ENCODE measurements at regions of chr2 and their contacts with region 1.

Region 1: GRCh38 chr2:216498418-216499413 is at the start of gene RPL37A:
- H3K4me3 Mint-ChIP-seq: peak within 1 kb of the TSS; percentile 99
- H3K27ac Mint-ChIP-seq: peak within 1 kb of the TSS; percentile 99
- H3K4me1 Mint-ChIP-seq: peaks cover 61% of the 10 kb centered on the region
- H3K27me3 Mint-ChIP-seq: no peaks in the 10 kb centered on the region

Region 2: DNA sequence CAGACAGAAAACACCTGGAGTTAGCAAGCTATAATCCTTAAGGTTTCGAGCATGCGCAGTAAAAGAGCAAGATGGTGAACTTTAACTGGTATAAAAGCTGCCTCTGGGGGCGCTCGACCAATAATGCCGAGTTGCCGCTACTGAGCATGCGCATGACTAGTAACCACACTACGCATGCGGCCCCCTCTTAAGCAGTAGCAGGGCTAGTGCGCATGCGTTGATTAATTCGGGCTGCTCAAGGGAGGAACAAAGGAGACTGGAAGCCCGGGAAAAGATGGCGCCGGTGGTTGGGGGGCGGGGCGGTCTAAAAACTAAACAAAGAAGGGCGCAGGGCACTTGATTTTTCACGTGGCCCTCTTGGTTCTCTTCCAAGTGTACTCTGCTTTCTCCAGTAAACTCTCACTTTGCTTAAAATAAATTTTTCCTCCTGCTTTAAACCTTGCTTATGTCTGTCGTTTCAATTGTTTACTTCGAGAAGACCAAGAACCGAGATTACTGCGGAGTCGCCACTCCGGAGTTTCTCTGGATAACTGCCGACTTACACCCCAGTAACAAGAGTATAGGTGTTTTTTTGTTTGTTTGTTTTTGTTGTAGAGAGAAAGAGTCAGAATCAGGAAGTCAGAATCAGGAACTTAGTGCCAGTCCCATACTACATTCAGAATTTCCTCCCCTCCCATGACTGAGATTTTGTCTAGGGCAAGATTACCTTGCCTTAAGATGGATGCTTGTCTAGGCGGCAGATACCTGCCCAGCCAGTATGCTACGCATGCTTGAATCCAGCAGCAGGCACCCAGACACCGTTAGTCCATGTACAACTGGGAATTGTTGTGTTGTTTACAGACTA is 383.8 kb before region 1 on chr2:
- intact Hi-C with region 1: loop called (anchors 5 kb)
- H3K4me3 Mint-ChIP-seq: peak overlapping the region; percentile 82
- H3K27ac Mint-ChIP-seq: peak overlapping the region; percentile 100
- H3K4me1 Mint-ChIP-seq: peaks cover 86% of the 10 kb centered on the region
- H3K27me3 Mint-ChIP-seq: no peaks in the 10 kb centered on the region

Region 3: DNA sequence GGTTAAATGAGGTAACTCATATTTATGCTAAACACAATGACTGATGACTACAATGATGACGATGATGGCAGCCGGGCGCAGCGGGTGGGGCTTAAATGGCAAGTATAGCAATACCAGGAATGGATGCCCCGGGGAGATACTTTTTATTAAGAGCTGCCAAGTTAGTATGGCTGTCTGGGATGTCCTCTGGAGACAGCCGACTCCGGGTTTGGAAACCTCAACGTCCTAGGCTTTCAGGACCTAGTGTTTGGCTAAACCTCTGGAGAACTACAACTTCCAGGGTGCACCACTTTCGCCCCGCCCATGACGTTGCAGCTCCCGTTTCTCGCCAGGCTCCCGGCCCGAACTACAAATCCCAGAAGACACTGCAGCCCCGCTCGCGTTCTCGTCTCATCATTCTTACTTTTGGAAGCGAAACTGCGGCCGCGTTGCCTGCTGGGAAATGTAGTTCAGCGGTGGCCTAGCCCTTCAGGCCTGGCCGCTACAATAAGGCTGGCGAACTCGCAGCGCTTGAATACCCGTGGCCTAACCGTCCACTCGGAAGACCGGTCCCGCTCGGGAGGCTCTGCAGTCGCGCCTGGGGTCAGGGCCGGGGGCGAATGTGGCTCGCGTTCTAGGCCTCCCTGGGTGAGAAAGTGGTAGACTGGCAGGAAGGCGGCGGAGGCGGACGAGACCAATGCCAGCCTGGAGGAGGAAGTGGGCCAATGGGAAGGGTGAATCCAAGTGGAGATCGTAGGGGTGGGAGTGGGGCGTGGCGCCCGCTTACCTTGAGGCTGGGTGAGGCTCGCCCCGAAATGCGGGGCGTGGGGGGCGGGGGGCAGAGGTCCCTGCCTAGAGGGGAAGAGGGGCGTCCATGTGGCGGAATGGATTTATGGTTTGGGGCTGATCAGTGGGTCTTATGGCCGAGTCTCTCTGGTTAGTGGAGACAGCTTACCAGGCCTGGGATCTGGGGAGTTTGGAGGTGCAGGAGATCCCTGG is 86.4 kb before region 1 on chr2 and contains the start of gene SMARCAL1:
- intact Hi-C with region 1: loop called (anchors 1 kb)
- H3K4me3 Mint-ChIP-seq: peak within 1 kb of the TSS; percentile 96
- H3K27ac Mint-ChIP-seq: peak within 1 kb of the TSS; percentile 93
- H3K4me1 Mint-ChIP-seq: peaks cover 10% of the 10 kb centered on the region
- H3K27me3 Mint-ChIP-seq: peaks cover 2% of the 10 kb centered on the region

Region 4: DNA sequence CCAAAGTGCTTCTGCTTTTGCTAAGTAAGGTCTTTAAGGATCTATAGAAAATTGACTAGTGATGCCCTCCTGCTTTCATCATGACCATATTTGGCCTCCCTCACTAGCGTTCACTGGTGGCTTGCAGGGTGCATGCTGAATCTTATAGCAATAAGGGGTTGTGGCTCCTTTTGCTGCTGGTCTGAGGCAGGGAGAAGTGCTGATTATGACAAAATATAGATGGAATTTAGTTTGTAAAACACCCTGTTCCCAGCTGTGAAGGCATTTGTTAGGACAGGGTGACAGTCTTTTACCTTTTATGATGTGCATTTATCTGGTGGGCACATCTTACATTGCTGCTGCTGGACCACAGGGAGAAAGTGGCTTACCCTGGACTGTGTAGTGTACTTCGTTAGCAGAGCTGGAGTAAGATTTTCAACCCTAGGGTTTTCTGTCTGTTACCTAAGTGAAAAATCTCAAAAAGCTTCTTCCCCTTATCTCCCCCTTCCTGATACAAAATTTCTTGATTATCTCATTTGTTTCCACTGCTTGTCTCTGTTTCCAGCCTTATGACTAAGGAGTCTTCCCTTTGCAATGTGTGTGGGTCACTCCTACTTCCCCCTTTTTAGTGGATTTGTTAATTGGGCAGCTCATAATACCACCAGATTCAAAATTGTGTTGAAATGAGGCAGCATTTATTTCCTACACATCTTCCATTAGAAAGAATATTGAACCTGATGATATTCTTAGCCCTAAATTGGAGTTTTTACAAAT is 21.3 kb before region 1 on chr2:
- intact Hi-C with region 1: loop called (anchors 2 kb)
- H3K4me3 Mint-ChIP-seq: no peak overlapping the region
- H3K27ac Mint-ChIP-seq: peak overlapping the region; percentile 52
- H3K4me1 Mint-ChIP-seq: peaks cover 60% of the 10 kb centered on the region
- H3K27me3 Mint-ChIP-seq: no peaks in the 10 kb centered on the region

Region 5: DNA sequence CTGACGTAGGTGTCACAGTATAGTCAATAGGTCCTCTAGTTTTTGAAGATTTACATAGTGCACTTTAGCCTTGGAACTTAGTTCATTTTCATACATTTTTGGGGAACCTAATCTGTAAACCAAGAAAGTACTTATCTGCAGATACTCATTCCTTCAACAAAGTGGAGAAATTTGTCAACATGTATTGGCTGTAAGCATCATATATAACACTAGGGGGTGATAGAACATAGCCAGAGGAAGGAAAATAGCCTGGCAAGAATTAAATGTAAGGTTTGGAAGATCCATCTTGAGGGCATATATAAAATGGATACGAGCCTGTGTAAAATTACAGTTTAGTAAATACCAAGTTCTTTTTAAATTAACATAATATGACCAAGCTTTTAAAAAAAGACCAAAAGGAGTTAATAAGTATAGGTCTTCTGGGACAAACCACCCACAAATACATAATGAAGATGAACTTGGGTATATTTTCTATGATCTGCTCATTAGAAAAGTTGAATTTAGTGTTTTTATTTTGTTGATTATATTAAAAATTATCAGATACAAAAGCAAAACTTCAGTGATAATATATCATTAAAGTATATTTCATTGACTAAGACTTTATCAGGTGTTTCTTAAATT is 18.1 kb after region 1 on chr2:
- intact Hi-C with region 1: no loop called
- H3K4me3 Mint-ChIP-seq: no peak overlapping the region
- H3K27ac Mint-ChIP-seq: no peak overlapping the region
- H3K4me1 Mint-ChIP-seq: no peaks in the 10 kb centered on the region
- H3K27me3 Mint-ChIP-seq: no peaks in the 10 kb centered on the region

Measured in dendritic cell treated with granulocyte-macrophage colony-stimulating factor and Interleukin-4, amounts not matched to agents 40 ng/mL and 50 ng/mL, for 4 days (primary cell).